HEK293 (cell line): ENCODE measurements at regions of chr5 and their contacts with region 1.

Region 1: GRCh38 chr5:160439205-160439600 is 17.5 kb downstream of the PTTG1 start:
- H3K4me3 ChIP-seq: peak overlapping the region; percentile 31
- H3K27ac ChIP-seq: no peak overlapping the region
- H3K4me1 ChIP-seq: no peaks in the 10 kb centered on the region; the same call in 1 of the 2 replicates
- CTCF ChIP-seq: peak; percentile 34

Region 2: DNA sequence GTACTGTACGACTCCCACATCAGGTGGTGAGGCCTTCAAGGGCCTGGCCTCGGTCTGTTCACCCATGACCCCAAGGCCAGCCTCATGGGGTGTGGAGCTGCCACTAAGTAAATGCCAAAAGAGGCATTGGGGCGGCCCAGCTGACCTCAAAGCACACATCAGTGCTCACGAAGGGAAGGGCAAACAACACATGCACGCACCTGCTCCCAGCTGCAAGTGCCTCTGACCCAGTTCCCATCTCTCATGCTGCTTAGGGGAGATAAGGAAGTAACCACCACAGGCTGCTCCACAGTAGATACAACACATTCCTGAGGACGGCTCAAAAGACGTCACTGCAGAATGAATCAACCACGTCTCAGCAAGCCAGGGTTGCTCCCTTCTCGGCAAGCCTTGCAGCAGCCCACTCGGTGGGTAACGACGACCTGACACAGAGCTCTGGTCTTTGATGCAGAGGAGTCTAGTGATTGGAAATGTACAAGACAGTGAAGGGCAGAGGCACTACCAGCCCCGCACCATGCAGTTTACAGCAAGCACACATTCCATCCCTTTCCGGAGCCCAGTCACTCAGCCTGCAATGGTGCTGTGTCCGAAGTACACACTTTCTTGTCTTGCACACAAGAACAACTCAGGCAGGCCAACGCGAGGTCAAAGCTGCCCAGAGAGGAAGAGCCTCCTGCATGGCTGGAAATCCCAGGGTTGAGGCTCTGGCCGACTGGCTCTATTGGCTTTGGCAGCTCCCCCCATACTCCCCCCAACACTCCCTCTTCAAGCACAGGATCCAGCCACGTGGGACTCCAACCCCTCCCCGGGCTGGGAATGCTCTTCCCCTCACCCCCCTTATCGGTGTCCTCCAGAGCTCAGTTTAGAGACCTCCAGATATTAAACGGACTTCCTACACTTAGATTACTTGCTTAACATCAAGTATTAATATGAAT is 178.1 kb before region 1 on chr5:
- CTCF ChIA-PET with region 1: no interaction called
- POLR2A ChIA-PET with region 1: no interaction called
- H3K4me3 ChIP-seq: no peak overlapping the region
- H3K27ac ChIP-seq: no peak overlapping the region
- H3K4me1 ChIP-seq: peaks cover 3% of the 10 kb centered on the region; the same call in 1 of the 2 replicates
- CTCF ChIP-seq: no peak

Region 3: DNA sequence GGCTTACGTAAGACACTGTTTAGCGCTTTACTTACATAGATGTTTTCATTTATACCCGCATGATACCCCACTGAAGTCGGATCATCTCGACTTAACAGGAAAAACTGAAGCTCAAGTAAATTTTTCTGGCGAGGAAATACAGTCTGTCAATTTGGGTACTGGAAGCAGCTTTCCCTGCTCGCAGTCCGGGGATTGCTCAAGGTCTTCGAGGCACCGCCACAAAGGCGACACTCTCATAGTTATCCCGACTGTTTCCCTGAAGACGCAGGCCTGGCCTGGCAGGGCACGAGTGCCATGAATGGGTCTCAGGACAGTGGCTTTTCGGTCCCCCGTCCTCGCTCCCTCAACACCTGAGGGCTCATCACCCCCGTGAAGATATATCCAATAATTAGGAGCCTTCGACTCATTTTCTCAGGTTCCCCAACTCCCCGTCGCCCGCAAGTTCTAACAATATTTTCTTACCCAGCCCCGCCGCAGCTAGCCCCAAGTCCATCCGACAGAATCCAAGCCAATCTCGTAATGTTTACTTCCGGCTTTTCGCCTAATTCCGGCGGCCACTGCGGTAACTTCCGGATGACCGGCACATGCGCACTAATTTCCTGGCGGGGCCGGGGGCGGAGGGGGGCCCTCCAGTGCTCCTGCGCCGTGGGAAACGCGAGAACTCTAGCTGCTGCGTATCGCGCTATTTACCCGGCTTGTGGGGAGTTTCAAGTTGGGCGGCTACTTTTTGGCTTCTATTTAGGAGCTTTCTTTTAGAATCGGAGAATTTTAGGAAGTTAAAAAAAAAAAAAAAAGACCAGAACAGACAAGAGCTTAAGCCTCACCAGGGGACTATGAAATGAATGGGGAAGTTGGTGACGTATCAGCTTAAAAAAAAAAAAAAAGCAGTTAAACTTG is 20.4 kb before region 1 on chr5 and contains the start of gene SLU7:
- CTCF ChIA-PET with region 1: interaction called, 56 read pairs
- POLR2A ChIA-PET with region 1: interaction called, 9 read pairs
- H3K4me3 ChIP-seq: peak within 1 kb of the TSS; percentile 99
- H3K27ac ChIP-seq: peak within 1 kb of the TSS; percentile 25
- H3K4me1 ChIP-seq: no peaks in the 10 kb centered on the region; the same call in 1 of the 2 replicates
- CTCF ChIP-seq: no peak

Region 4: DNA sequence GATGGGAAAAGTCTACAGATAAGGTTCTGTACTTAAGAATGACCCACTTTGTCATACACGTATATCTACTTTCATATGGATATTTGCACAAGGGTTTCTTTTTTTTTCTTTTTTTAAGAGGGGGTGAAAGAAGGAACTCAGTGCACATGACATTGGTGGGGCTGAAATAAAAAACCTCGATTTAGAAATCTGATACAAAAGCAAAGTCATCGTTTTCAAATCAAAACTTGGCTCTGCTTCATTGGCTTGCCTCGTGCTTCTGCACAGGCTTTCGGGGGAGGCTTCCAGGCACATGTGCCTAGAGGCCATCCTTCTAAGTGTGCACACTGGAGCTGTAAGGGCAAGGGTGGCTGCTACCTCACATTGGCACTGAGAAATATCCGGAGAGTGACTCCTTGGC is 13.6 kb after region 1 on chr5:
- CTCF ChIA-PET with region 1: interaction called, 29 read pairs
- POLR2A ChIA-PET with region 1: no interaction called
- H3K4me3 ChIP-seq: no peak overlapping the region
- H3K27ac ChIP-seq: no peak overlapping the region
- H3K4me1 ChIP-seq: no peaks in the 10 kb centered on the region
- CTCF ChIP-seq: no peak

Region 5: DNA sequence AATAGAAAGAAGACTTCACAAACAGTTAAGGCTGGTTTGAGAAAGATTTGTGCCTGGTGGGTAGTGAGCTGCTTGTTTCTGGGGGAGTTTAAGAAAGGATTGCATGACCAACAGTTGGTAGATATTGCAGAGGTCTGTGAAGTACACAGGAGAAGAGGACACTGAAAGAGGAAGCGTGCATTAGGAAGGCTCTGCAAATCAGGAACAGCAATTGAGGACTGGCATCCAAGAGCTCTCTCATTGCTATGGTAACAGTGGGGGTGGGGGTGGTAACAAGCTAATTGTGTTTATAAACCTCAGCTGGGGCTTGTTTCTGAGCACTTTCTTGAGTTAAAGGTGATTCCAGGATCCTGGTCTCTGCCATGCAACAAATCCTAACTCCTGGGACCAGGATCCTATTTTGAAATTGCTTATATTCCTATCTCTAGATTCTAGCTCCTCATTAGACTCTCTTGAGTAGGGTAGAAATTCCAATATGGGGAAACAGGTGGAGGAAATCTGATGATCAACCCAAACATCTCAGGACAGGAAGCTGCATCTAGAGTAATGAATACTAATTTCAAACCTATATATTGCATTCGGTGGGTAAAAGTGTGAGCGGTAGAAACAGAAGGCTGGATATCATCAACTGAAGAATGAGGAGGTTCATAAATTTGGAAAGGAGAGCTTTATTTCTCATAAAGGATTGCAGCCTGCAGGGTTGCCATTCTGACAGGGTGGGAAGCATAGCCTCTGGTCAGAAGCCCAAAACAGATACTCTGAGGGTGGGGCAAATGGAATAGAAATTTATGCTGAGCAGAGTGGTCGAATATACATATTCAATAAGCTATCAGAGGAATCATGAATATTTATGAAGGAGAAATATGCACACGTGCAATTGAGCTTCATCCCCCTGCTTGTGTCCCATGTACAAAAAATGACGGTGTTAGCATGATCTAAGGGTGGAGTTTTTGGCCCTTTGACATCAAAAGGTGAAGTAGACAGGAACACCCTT is 61.9 kb after region 1 on chr5:
- CTCF ChIA-PET with region 1: interaction called, 26 read pairs
- POLR2A ChIA-PET with region 1: no interaction called
- H3K4me3 ChIP-seq: no peak overlapping the region
- H3K27ac ChIP-seq: no peak overlapping the region
- H3K4me1 ChIP-seq: no peaks in the 10 kb centered on the region
- CTCF ChIP-seq: no peak

Region 6: GRCh38 chr5:160787240-160787639 is 348.0 kb after region 1 on chr5:
- CTCF ChIA-PET with region 1: interaction called, 14 read pairs
- POLR2A ChIA-PET with region 1: no interaction called
- H3K4me3 ChIP-seq: no peak overlapping the region
- H3K27ac ChIP-seq: no peak overlapping the region
- H3K4me1 ChIP-seq: no peaks in the 10 kb centered on the region
- CTCF ChIP-seq: peak; percentile 42; the same call in 1 of the 2 replicates